Naive thymus-derived CD4-positive, alpha-beta T cell (primary cell): ENCODE measurements at regions of chr7 and their contacts with region 1.

Region 1: DNA sequence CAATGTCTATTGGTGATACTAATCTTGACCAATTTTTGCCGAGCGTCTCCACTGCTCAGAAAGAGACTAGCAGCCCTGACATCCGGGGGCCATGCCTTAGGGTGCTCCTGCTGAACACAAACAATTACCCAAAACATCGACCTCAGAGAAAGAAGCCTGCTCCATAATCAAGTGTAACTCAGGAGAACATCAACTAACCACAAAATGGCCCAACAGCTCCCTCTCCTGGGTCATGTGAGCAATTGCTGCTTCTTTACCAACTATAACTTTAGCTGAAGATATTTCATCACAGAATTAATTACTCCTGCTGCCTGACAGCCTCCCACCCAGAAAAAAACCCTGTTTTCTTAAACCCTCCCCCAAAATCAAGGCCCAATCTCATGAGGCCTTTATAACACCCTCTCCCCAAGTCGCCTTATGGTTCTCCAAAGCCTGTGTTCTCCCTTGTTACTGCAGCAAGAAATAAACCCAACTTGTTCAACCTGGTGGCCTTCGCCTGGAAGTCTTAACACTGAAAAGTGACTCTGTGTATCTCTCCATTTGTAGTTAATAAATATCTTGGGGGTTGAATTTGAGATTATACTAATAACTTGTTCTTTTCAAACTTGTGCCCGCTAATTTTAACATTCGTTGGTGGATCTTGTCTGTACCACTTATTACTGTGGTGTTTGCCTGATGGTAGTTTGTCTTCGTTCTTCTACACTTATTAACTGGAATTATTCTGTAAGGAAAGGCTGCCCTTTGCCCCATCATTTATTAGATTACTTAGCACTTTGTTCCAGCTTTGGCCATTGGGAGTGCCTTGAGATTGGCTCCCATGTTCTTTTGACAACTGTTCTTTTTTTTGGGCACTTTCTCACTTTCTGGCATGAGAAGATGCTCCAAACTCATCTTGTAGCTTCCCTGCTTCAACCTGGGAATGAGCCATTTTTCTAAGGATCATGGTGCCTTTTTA is 21.2 kb upstream of the RAMP3 start:
- DNase-seq: peak; percentile 38 to 81 (median 70)
- ATAC-seq: peak; percentile 91
- H3K4me3 ChIP-seq: no peak overlapping the region
- H3K4me3 Mint-ChIP-seq: peak overlapping the region in 1 of 10 donors; percentile 21
- H3K27ac ChIP-seq: no peak overlapping the region
- H3K27ac Mint-ChIP-seq: peak overlapping the region in 8 of 9 donors; percentile 0 to 84 (median 48)
- H3K4me1 ChIP-seq: peaks cover 0 to 3% of the 10 kb centered on the region in 2 donors
- H3K4me1 Mint-ChIP-seq: peaks cover 6 to 27% (median 10%) of the 10 kb centered on the region in 7 donors
- H3K27me3 ChIP-seq: no peaks in the 10 kb centered on the region
- H3K27me3 Mint-ChIP-seq: peaks cover 0 to 2% (median 0%) of the 10 kb centered on the region in 5 donors

Region 2: GRCh38 chr7:44240983-44241510 is 895.3 kb before region 1 on chr7:
- CTCF ChIA-PET with region 1: no interaction called
- POLR2A ChIA-PET with region 1: no interaction called
- intact Hi-C with region 1: loop called in 1 of 2 experiments (anchors 5 kb)
- DNase-seq: peak; percentile 40 to 70 (median 66)
- ATAC-seq: peak; percentile 81
- H3K4me3 ChIP-seq: peak overlapping the region; percentile 27
- H3K4me3 Mint-ChIP-seq: peak overlapping the region in 8 of 10 donors; percentile 37 to 69 (median 50)
- H3K27ac ChIP-seq: no peak overlapping the region
- H3K27ac Mint-ChIP-seq: peak overlapping the region in 2 of 9 donors; percentile 39 to 62
- H3K4me1 ChIP-seq: no peaks in the 10 kb centered on the region
- H3K4me1 Mint-ChIP-seq: peaks cover 0 to 4% (median 0%) of the 10 kb centered on the region in 7 donors
- H3K27me3 ChIP-seq: no peaks in the 10 kb centered on the region
- H3K27me3 Mint-ChIP-seq: peaks cover 0 to 3% (median 0%) of the 10 kb centered on the region in 5 donors

Region 3: GRCh38 chr7:44858161-44858560 is 278.2 kb before region 1 on chr7:
- CTCF ChIA-PET with region 1: interaction called, 58 read pairs
- POLR2A ChIA-PET with region 1: interaction called, 3 read pairs
- intact Hi-C with region 1: loop called (anchors 1 kb)
- DNase-seq: no peak
- ATAC-seq: no peak
- H3K4me3 ChIP-seq: no peak overlapping the region
- H3K4me3 Mint-ChIP-seq: no peak overlapping the region
- H3K27ac ChIP-seq: no peak overlapping the region
- H3K27ac Mint-ChIP-seq: peak overlapping the region in 1 of 9 donors; percentile 9
- H3K4me1 ChIP-seq: peaks cover 0 to 4% of the 10 kb centered on the region in 2 donors
- H3K4me1 Mint-ChIP-seq: peaks cover 0 to 21% (median 5%) of the 10 kb centered on the region in 7 donors
- H3K27me3 ChIP-seq: no peaks in the 10 kb centered on the region
- H3K27me3 Mint-ChIP-seq: peaks cover 0 to 6% (median 0%) of the 10 kb centered on the region in 5 donors

Region 4: GRCh38 chr7:44973610-44974401 is 162.6 kb before region 1 on chr7:
- CTCF ChIA-PET with region 1: interaction called, 139 read pairs
- POLR2A ChIA-PET with region 1: interaction called, 20 read pairs
- intact Hi-C with region 1: loop called (anchors 1 kb)
- DNase-seq: peak in 7 of 9 donors; percentile 52 to 70 (median 66)
- ATAC-seq: peak; percentile 31
- H3K4me3 ChIP-seq: no peak overlapping the region
- H3K4me3 Mint-ChIP-seq: peak overlapping the region in 4 of 10 donors; percentile 5 to 23 (median 10)
- H3K27ac ChIP-seq: peak overlapping the region; percentile 83
- H3K27ac Mint-ChIP-seq: peak overlapping the region in 8 of 9 donors; percentile 18 to 88 (median 67)
- H3K4me1 ChIP-seq: peaks cover 28 to 46% of the 10 kb centered on the region in 2 donors
- H3K4me1 Mint-ChIP-seq: peaks cover 29 to 59% (median 40%) of the 10 kb centered on the region in 7 donors
- H3K27me3 ChIP-seq: no peaks in the 10 kb centered on the region
- H3K27me3 Mint-ChIP-seq: no peaks in the 10 kb centered on the region

Region 5: DNA sequence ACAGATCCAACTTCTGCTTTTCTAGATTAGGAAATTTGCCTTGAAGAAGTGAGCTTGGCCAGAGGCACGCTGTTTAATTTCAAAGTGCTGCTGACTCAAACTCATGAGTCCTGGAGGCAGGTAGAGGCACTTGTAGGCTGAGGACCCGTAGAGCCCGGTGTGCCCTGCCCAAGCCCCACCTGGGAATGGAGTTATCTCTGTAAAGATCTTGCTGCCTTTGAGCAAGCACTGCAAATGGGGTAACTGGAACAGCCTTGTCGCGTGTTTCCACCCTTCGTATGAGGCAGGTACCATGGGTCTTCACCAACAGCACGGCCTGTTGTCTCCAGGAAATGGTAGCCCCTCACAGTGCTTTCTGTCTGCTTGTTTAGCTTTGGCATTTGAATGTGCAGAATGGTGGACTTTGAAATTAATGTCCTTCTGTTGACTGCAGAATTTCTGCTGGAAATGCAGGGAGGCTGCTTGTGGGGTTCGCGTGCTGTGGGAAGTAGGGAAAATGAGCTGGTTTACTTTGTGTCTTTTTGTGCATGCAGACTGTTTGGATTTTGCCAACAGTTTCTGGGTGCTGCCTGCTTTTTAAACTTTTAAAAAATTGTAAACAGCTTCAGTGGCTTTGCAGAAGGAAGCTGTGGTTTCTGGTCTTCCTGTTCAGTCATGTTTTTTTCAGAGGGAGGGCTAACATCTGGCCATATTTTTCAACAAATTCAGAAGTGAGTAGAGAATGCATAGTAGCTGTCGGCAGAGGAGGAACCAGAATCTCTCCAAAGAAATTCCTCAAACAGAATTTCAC is 109.2 kb before region 1 on chr7:
- CTCF ChIA-PET with region 1: no interaction called
- POLR2A ChIA-PET with region 1: interaction called, 3 read pairs
- intact Hi-C with region 1: loop called in 1 of 2 experiments (anchors 5 kb)
- DNase-seq: peak in 7 of 9 donors; percentile 42 to 79 (median 71)
- ATAC-seq: peak; percentile 81
- H3K4me3 ChIP-seq: peak overlapping the region; percentile 87
- H3K4me3 Mint-ChIP-seq: peak overlapping the region; percentile 89 to 98 (median 95)
- H3K27ac ChIP-seq: peak overlapping the region; percentile 86
- H3K27ac Mint-ChIP-seq: peak overlapping the region; percentile 80 to 97 (median 93)
- H3K4me1 ChIP-seq: peaks cover 34 to 57% of the 10 kb centered on the region in 2 donors
- H3K4me1 Mint-ChIP-seq: peaks cover 44 to 70% (median 62%) of the 10 kb centered on the region in 7 donors
- H3K27me3 ChIP-seq: no peaks in the 10 kb centered on the region
- H3K27me3 Mint-ChIP-seq: no peaks in the 10 kb centered on the region

Region 6: GRCh38 chr7:45111298-45112223 is 24.8 kb before region 1 on chr7 and contains the start of gene TBRG4:
- CTCF ChIA-PET with region 1: interaction called, 9 read pairs
- POLR2A ChIA-PET with region 1: interaction called, 15 read pairs
- intact Hi-C with region 1: loop called (anchors 1 to 2 kb)
- DNase-seq: peak; percentile 88 to 96 (median 94)
- ATAC-seq: peak; percentile 94
- H3K4me3 ChIP-seq: peak within 1 kb of the TSS; percentile 80
- H3K4me3 Mint-ChIP-seq: peak within 1 kb of the TSS; percentile 93 to 100 (median 96)
- H3K27ac ChIP-seq: peak within 1 kb of the TSS; percentile 98
- H3K27ac Mint-ChIP-seq: peak within 1 kb of the TSS; percentile 98 to 100 (median 99)
- H3K4me1 ChIP-seq: peaks cover 17 to 45% of the 10 kb centered on the region in 2 donors
- H3K4me1 Mint-ChIP-seq: peaks cover 30 to 59% (median 50%) of the 10 kb centered on the region in 7 donors
- H3K27me3 ChIP-seq: no peaks in the 10 kb centered on the region
- H3K27me3 Mint-ChIP-seq: peaks cover 0 to 31% (median 0%) of the 10 kb centered on the region in 5 donors
- total RNA-seq, gene TBRG4: 93.7 to 143 (median 107) TPM